PC-9 (cell line): ENCODE measurements at regions of chr20 and their contacts with region 1.

Region 1: DNA sequence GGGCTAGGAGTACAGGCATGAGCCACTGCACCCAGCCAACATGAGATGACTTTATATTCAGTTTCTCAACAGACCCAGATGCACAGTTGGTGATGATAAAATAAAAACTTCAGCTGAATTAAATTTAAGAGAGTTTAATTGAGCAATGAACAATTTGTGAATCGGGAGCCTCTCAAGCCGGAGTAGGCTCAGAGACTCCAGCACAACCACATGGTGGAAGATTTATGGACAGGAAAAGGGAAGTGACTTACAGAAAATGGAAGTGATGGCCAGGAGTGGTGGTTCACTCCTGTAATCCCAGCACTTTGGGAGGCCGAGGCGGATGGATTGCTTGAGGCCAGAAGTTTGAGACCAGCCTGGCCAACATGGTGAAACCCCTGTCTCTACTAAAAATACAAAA is 10.4 kb upstream of the BCAS4 start:
- DNase-seq: no peak
- H3K4me3 ChIP-seq: no peak overlapping the region
- H3K27ac ChIP-seq: no peak overlapping the region
- H3K4me1 ChIP-seq: no peaks in the 10 kb centered on the region
- H3K27me3 ChIP-seq: no peaks in the 10 kb centered on the region
- CTCF ChIP-seq: no peak

Region 2: GRCh38 chr20:50815162-50815989 is 30.9 kb after region 1 on chr20:
- CTCF ChIA-PET with region 1: no interaction called
- POLR2A ChIA-PET with region 1: no interaction called
- intact Hi-C with region 1: no loop called
- DNase-seq: peak; percentile 46 to 53
- H3K4me3 ChIP-seq: no peak overlapping the region
- H3K27ac ChIP-seq: no peak overlapping the region; the same call in 1 of the 2 replicates
- H3K4me1 ChIP-seq: 0 out of 2 replicates have a peak, but pooled peaks cover 7% of the 10 kb centered on the region
- H3K27me3 ChIP-seq: no peaks in the 10 kb centered on the region
- CTCF ChIP-seq: no peak

Region 3: DNA sequence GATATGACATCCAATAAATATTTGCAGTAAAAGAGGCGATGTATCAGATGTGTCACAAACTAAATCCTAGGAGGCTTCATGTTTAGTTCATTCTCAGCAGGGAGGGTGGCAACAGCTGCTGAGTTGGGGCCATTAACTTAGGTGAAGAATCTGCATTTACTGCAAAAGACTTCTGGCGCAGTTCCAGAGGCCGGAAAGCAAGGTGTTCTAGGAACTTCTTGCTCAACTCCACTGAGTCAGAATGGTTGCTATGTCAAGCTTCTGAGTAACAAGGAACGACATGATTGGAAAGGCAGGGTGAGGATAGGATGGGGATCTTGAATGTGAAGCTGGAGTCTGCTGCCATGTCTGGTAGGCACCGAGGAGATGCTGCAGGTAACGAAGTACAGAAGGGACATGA is 135.1 kb after region 1 on chr20:
- CTCF ChIA-PET with region 1: no interaction called
- POLR2A ChIA-PET with region 1: no interaction called
- intact Hi-C with region 1: no loop called
- DNase-seq: peak; percentile 10 to 71
- H3K4me3 ChIP-seq: no peak overlapping the region
- H3K27ac ChIP-seq: no peak overlapping the region
- H3K4me1 ChIP-seq: no peaks in the 10 kb centered on the region
- H3K27me3 ChIP-seq: no peaks in the 10 kb centered on the region
- CTCF ChIP-seq: no peak

Region 4: GRCh38 chr20:50958615-50959542 is 174.4 kb after region 1 on chr20 and contains the start of gene MOCS3:
- CTCF ChIA-PET with region 1: no interaction called
- POLR2A ChIA-PET with region 1: interaction called, 14 read pairs
- intact Hi-C with region 1: no loop called
- DNase-seq: peak; percentile 82 to 92
- H3K4me3 ChIP-seq: peak within 1 kb of the TSS; percentile 93
- H3K27ac ChIP-seq: peak within 1 kb of the TSS; percentile 83
- H3K4me1 ChIP-seq: peaks cover 38% of the 10 kb centered on the region
- H3K27me3 ChIP-seq: no peaks in the 10 kb centered on the region
- CTCF ChIP-seq: no peak
- total RNA-seq, gene MOCS3: 4.8 and 5.5 TPM in 2 replicates

Region 5: GRCh38 chr20:51811042-51811355 is 1026.5 kb after region 1 on chr20:
- CTCF ChIA-PET with region 1: no interaction called
- POLR2A ChIA-PET with region 1: no interaction called
- intact Hi-C with region 1: no loop called
- DNase-seq: peak in 1 of 2 experiments; percentile 74
- H3K4me3 ChIP-seq: no peak overlapping the region
- H3K27ac ChIP-seq: peak overlapping the region; percentile 40
- H3K4me1 ChIP-seq: peaks cover 15% of the 10 kb centered on the region
- H3K27me3 ChIP-seq: no peaks in the 10 kb centered on the region
- CTCF ChIP-seq: no peak